Activated naive CD8-positive, alpha-beta T cell treated with anti-CD3 and anti-CD28 coated beads, Interleukin-2, amount 10 ng/mL, durations not matched to agents 7 days and 5 days (primary cell): ENCODE measurements at regions of chr5 and their contacts with region 1.

Region 1: GRCh38 chr5:126776497-126777256 is at the start of gene LMNB1:
- DNase-seq: peak; percentile 98
- ATAC-seq: peak; percentile 71
- H3K4me3 Mint-ChIP-seq: peak within 1 kb of the TSS; percentile 96
- H3K27ac Mint-ChIP-seq: peak within 1 kb of the TSS; percentile 99
- H3K4me1 Mint-ChIP-seq: peaks cover 17% of the 10 kb centered on the region
- H3K27me3 Mint-ChIP-seq: no peaks in the 10 kb centered on the region
- total RNA-seq, gene LMNB1: 229 to 243 TPM

Region 2: GRCh38 chr5:126686451-126687126 is 90.1 kb before region 1 on chr5:
- POLR2A ChIA-PET with region 1: interaction called, 119 read pairs
- DNase-seq: no peak
- ATAC-seq: no peak
- H3K4me3 Mint-ChIP-seq: no peak overlapping the region
- H3K27ac Mint-ChIP-seq: no peak overlapping the region
- H3K4me1 Mint-ChIP-seq: peaks cover 15% of the 10 kb centered on the region
- H3K27me3 Mint-ChIP-seq: peaks cover 2% of the 10 kb centered on the region

Region 3: GRCh38 chr5:126736141-126736540 is 40.5 kb before region 1 on chr5:
- POLR2A ChIA-PET with region 1: interaction called, 18 read pairs
- DNase-seq: no peak
- ATAC-seq: no peak
- H3K4me3 Mint-ChIP-seq: no peak overlapping the region
- H3K27ac Mint-ChIP-seq: no peak overlapping the region
- H3K4me1 Mint-ChIP-seq: peaks cover under 1% of the 10 kb centered on the region
- H3K27me3 Mint-ChIP-seq: peaks cover 11% of the 10 kb centered on the region

Region 4: DNA sequence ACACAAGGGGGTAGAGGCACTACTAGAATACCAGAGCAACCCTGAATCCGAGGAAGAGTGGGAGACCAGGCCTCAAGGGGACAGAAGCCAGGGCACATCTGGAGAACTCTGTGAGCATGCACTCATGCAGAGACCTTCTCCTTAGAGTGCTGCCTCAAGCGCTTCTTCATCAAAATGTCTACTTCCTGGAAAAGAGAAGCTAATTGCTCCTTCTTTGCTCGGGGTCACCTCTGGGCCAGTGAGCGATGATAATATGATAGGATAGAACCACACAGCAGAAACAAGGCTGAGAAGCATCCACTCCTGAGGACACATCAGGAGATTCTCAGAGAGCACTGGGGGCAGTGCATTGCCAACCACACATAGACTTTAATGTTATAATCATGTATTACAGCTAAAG is 23.4 kb before region 1 on chr5:
- POLR2A ChIA-PET with region 1: interaction called, 255 read pairs
- DNase-seq: no peak
- ATAC-seq: no peak
- H3K4me3 Mint-ChIP-seq: no peak overlapping the region
- H3K27ac Mint-ChIP-seq: no peak overlapping the region
- H3K4me1 Mint-ChIP-seq: peaks cover 26% of the 10 kb centered on the region
- H3K27me3 Mint-ChIP-seq: no peaks in the 10 kb centered on the region